RWPE1 (cell line): ENCODE measurements at regions of chr14 and their contacts with region 1.

Region 1: DNA sequence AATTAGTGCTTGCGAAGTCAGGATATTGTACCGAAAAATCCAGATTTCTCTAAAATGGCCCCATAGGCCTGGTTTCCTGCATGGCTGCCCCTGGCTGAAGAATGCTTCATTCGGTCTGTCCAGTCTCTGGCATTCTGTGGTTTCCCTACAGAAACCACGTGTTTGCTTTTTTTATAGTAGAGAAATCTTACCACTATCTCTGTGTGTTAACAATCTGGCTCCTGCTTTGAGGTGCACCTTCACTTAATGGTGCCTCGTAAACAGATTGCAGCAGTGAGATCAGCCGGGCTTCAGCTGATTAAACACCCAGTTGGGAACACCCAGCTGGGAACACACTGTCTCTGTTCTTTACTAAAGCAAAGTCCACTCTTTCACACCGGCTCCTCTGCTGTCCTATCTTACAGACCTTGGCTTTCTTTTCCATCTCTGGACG is 6.7 kb upstream of the DNAAF2 start:
- DNase-seq: no peak
- H3K27ac ChIP-seq: no peak overlapping the region
- CTCF ChIP-seq: no peak

Region 2: GRCh38 chr14:49220492-49220891 is 421.2 kb before region 1 on chr14:
- CTCF ChIA-PET with region 1: no interaction called
- POLR2A ChIA-PET with region 1: no interaction called
- DNase-seq: no peak
- H3K27ac ChIP-seq: no peak overlapping the region
- CTCF ChIP-seq: no peak

Region 3: GRCh38 chr14:49598485-49599300 is 43.0 kb before region 1 on chr14 and contains the start of gene LRR1:
- CTCF ChIA-PET with region 1: no interaction called
- POLR2A ChIA-PET with region 1: interaction called, 15 read pairs
- DNase-seq: peak; percentile 67
- H3K27ac ChIP-seq: peak within 1 kb of the TSS; percentile 96
- CTCF ChIP-seq: no peak